Endothelial cell of umbilical vein (primary cell): ENCODE measurements at regions of chr19 and their contacts with region 1.

Region 1: DNA sequence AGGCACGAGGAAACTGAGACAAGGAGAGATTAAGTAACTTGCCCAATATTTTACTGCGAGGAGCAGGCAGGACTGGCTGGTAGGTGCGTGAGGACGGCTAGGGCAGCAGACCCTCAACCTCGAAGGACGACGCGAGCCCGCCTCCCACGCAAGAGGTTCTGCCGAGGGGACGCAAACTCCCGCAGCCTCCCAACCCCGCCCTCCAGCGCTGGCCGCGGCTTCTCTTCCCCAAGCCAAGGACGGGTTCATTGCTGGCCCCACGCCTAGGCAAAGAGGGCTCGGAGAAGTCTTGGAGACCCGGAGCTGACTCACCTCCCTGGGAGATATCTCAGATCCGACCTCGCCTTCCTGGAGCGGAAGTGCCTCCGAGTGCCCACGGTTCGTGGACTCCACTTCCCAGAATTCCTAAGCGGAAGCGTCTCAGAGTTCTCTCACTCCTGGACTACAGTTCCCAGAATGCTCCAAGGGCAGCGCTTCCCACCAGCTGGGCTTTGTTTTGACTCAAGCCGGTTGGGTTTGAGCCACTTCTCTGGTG is at the start of gene ZNF235:
- DNase-seq: peak; percentile 97
- H3K4me3 ChIP-seq: peak within 1 kb of the TSS; percentile 76 to 95 (median 82)
- H3K27ac ChIP-seq: peak within 1 kb of the TSS; percentile 63
- H3K4me1 ChIP-seq: peaks cover 5% of the 10 kb centered on the region
- H3K27me3 ChIP-seq: no peaks in the 10 kb centered on the region
- CTCF ChIP-seq: no peak
- POLR2A ChIP-seq: peak; percentile 51
- total RNA-seq, gene ZNF235: 5.2 TPM in 2 replicates

Region 2: GRCh38 chr19:44260363-44261070 is 44.2 kb before region 1 on chr19:
- CTCF ChIA-PET with region 1: interaction called, 3 read pairs
- POLR2A ChIA-PET with region 1: no interaction called
- dilution Hi-C with region 1: no loop called
- intact Hi-C with region 1: loop called (anchors 2 kb)
- DNase-seq: no peak
- H3K4me3 ChIP-seq: peak overlapping the region in 2 of 3 experiments; percentile 44 to 48
- H3K27ac ChIP-seq: no peak overlapping the region
- H3K4me1 ChIP-seq: no peaks in the 10 kb centered on the region
- H3K27me3 ChIP-seq: no peaks in the 10 kb centered on the region
- CTCF ChIP-seq: no peak
- POLR2A ChIP-seq: no peak

Region 3: DNA sequence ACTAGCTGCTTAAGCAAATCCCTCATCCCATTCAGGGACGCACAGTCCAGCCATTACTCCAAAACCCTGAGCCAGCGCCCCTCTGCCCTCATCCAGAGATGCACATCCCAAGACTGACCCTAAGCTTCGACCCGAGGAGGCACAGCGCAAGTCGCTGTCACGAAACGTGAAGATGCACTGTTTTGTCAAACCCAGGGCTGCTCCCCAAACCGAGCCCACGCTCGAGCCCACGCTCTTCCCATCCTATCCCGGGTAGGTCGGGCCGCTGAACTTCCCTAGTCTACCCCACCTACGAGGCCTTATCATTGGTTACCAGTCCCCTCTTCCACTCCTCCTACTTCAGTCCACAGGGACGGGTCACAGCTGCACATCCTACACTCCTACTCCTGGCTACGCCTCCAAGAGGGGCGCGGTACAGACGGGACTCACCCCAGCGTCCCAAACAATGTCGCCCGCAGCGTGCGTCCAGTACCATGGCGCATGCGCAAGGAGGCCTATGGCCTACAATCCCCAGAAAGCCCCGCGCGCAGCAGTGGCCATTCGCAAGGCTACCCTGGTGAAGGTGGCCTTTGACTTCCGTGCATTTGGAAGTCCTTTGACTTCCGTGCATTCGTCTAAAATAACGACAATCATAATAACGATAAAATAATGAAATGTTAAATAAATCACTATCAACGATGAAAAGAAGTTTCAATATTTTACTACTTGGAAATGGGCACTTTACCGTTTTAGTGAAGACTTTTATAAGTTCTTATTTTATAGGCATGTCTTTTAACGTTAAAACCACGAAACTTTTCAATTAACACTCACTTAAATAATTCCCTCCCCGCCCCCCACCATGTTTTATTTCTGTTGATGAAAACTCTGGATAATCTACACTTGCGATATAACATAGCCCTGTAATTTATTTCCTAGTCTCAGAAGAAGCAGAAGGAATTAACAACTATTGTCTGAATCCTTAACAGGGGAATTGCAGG is 96.7 kb after region 1 on chr19 and contains the start of gene ZNF285:
- CTCF ChIA-PET with region 1: no interaction called
- POLR2A ChIA-PET with region 1: no interaction called
- dilution Hi-C with region 1: no loop called
- intact Hi-C with region 1: loop called (anchors 1 kb)
- DNase-seq: peak; percentile 98
- H3K4me3 ChIP-seq: peak within 1 kb of the TSS; percentile 46 to 66 (median 55)
- H3K27ac ChIP-seq: no peak within 1 kb of the TSS
- H3K4me1 ChIP-seq: no peaks in the 10 kb centered on the region
- H3K27me3 ChIP-seq: no peaks in the 10 kb centered on the region
- CTCF ChIP-seq: no peak
- POLR2A ChIP-seq: peak; percentile 19
- total RNA-seq, gene ZNF285: 3.6 and 4.6 TPM in 2 replicates